ENCODE measurements at regions of chr1 and their contacts with region 1.

Region 1: GRCh38 chr1:156725683-156726280 is 2.5 kb upstream of the METTL25B start:
- DNase-seq: no peak
- H3K4me3 ChIP-seq: peak overlapping the region; percentile 11 to 37
- H3K27ac ChIP-seq: peak overlapping the region; percentile 99
- H3K4me1 ChIP-seq: peaks cover 57% of the 10 kb centered on the region
- H3K27me3 ChIP-seq: no peaks in the 10 kb centered on the region
- CTCF ChIP-seq: peak; percentile 72 to 96 (median 93)
- POLR2A ChIP-seq: no peak

Region 2: GRCh38 chr1:156689035-156689952 is 36.5 kb before region 1 on chr1:
- intact Hi-C with region 1: loop called (anchors 1 kb)
- DNase-seq: no peak
- H3K4me3 ChIP-seq: peak overlapping the region; percentile 15
- H3K27ac ChIP-seq: peak overlapping the region; percentile 60
- H3K4me1 ChIP-seq: peaks cover 51% of the 10 kb centered on the region
- H3K27me3 ChIP-seq: no peaks in the 10 kb centered on the region
- CTCF ChIP-seq: peak; percentile 73 to 94 (median 87)
- POLR2A ChIP-seq: no peak

Region 3: GRCh38 chr1:156705918-156706656 is 19.7 kb before region 1 on chr1:
- intact Hi-C with region 1: loop called (anchors 2 kb)
- DNase-seq: no peak
- H3K4me3 ChIP-seq: peak overlapping the region; percentile 51 to 60
- H3K27ac ChIP-seq: peak overlapping the region; percentile 95
- H3K4me1 ChIP-seq: peaks cover 84% of the 10 kb centered on the region
- H3K27me3 ChIP-seq: no peaks in the 10 kb centered on the region
- CTCF ChIP-seq: peak; percentile 31 to 77 (median 70)
- POLR2A ChIP-seq: no peak

Measured in vagina (tissue), 2 donors.